Activated CD8-positive, alpha-beta memory T cell treated with anti-CD3 and anti-CD28 coated beads, Interleukin-2, amount 10 ng/mL, durations not matched to agents 7 days and 5 days (primary cell): ENCODE measurements at regions of chr11 and their contacts with region 1.

Region 1: GRCh38 chr11:65637794-65638317 is at the start of gene SIPA1:
- DNase-seq: peak; percentile 76
- ATAC-seq: peak; percentile 64
- H3K4me3 Mint-ChIP-seq: peak within 1 kb of the TSS; percentile 81
- H3K27ac Mint-ChIP-seq: peak within 1 kb of the TSS; percentile 95
- H3K4me1 Mint-ChIP-seq: peaks cover 59% of the 10 kb centered on the region
- H3K27me3 Mint-ChIP-seq: no peaks in the 10 kb centered on the region
- total RNA-seq, gene SIPA1: 188 to 267 TPM

Region 2: DNA sequence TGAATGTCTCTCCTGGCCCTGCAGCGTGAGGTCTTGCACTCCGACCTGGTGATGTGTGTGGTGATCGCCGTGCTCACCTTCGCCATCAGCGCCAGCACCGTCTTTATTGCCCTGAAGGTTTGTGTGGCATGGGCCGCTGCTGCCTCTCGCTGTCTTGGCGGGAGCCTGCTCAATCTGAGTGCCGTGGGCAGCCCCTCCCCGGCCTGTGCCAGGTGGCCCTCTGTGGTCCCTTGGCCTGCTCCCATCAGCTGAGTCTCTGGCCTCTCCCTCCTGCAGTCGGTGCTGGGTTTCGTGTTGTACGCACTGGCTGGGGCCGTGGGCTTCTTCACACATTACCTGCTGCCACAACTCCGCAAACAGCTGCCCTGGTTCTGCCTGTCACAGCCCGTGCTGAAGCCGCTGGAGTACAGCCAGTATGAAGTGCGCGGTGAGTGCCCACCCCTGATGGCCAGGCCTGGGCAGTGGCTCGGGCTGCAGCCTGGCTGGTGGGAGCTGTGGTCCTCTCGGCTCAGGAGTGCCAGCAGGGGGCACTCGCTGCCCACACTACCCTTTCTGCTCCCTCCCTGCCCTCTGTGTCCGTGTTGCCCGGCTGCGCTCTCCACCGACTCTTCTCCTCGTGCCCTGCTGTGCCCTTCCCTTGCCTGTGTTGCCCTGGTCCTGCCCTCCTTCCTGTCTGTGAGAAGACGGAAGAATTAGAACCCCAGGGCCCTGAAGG is 12.1 kb before region 1 on chr11:
- CTCF ChIA-PET with region 1: interaction called, 20 read pairs
- DNase-seq: peak; percentile 59
- ATAC-seq: peak; percentile 80
- H3K4me3 Mint-ChIP-seq: no peak overlapping the region
- H3K27ac Mint-ChIP-seq: no peak overlapping the region
- H3K4me1 Mint-ChIP-seq: no peaks in the 10 kb centered on the region
- H3K27me3 Mint-ChIP-seq: no peaks in the 10 kb centered on the region

Region 3: DNA sequence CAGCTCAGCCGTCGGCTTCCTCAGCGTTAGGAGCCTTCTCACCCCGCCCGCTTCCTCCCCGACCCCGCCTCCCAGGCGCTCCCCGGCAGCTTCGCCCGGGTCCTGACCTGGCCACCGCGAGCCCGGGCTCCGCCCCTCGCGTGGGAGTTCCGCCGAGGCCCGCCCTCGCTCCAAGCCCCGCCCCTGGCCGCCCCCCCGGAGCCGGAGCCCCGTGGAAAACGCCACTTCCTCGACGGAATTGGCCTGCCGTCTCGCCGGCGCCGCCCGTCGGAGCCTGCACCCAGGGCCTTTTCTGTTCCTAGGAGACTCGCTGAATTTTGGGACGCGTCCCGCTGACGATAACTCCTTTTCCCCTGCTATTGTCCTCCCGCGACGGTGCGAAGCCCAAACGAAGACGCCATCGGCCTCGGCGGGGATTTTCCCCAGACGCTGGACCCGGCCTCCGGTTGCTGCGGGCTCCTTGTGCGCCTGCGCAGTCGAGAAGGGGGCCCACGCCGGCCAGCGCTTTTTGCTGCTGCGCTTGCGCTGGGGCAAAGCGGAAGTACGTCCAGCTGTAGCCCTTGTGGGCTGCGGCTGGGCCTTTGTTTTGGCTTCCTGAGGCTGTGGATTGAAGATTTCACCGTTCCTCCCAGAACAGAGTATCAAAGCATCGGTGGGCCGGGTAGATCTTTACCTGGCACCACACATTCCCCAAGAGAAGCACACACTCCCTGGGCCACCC is 14.8 kb after region 1 on chr11:
- CTCF ChIA-PET with region 1: interaction called, 35 read pairs
- DNase-seq: peak; percentile 97
- ATAC-seq: peak; percentile 90
- H3K4me3 Mint-ChIP-seq: peak overlapping the region; percentile 81
- H3K27ac Mint-ChIP-seq: peak overlapping the region; percentile 94
- H3K4me1 Mint-ChIP-seq: peaks cover 35% of the 10 kb centered on the region
- H3K27me3 Mint-ChIP-seq: no peaks in the 10 kb centered on the region

Region 4: DNA sequence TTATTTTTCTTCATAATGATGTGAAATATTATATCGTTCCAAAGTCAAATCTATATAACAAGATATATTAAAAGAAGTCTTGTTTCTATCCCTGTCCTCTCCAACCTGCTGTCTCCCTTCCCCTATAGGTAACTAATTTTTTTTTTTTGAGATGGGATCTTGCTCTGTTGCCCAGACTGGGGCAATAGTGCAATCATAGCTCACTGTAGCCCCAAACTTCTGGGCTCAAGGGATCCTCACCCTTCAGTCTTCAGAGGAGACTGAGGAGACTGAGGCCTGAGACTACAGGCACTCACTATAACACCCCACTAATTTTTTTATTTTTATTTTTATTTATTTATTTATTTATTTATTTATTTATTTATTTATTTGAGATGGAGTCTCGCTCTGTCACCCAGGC is 35.1 kb after region 1 on chr11:
- CTCF ChIA-PET with region 1: no interaction called
- DNase-seq: no peak
- ATAC-seq: no peak
- H3K4me3 Mint-ChIP-seq: no peak overlapping the region
- H3K27ac Mint-ChIP-seq: no peak overlapping the region
- H3K4me1 Mint-ChIP-seq: peaks cover 3% of the 10 kb centered on the region
- H3K27me3 Mint-ChIP-seq: no peaks in the 10 kb centered on the region